ENCODE measurements at regions of chr11 and their contacts with region 1.

Region 1: DNA sequence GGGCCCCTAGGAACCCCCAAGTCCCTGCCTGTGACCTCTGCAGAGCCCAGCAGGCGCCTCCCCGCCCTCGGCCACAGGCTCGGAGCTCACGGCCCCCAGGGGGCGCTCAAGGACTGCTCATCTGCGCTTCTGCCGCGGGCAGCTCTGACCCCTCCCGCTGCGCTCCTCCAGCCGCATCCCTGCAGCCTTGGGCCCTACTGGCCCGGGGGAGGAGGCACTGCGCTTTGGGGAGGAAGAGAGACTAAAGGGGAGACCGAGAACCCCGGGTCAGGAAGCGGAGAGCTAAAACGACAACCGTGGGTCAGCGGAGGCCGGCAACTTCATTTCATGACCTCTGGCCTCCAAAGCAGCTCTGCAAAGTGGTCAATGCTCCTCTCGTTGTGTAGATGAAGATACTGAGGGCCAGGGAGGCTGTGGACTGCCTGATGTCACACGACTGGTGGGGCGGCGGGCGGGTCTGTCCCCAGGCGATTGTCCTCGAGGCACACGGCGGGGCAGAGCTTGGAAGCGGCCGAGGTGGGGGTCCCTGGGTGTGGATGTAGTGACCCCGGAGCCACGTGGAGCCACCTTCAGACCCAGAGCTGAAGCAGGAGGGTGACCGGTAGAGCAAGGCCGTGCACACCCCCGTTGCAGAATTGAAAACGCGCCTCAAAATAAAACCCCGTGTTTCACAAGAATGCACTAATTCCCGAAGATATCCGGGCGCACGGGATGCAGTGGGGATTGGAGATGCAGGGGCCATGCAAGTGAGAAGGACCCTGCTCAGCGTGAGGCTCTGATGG is 2.7 kb upstream of the KRTAP5-6 start:
- DNase-seq: peak; percentile 80 to 88
- ATAC-seq: peak; percentile 82 to 95
- H3K4me3 ChIP-seq: peak overlapping the region; percentile 62
- H3K27ac ChIP-seq: peak overlapping the region; percentile 87 to 92
- H3K4me1 ChIP-seq: no peaks in the 10 kb centered on the region
- CTCF ChIP-seq: peak; percentile 88
- EP300 ChIP-seq: no peak
- POLR2A ChIP-seq: no peak
- RAD21 ChIP-seq: peak; percentile 94 to 99

Region 2: DNA sequence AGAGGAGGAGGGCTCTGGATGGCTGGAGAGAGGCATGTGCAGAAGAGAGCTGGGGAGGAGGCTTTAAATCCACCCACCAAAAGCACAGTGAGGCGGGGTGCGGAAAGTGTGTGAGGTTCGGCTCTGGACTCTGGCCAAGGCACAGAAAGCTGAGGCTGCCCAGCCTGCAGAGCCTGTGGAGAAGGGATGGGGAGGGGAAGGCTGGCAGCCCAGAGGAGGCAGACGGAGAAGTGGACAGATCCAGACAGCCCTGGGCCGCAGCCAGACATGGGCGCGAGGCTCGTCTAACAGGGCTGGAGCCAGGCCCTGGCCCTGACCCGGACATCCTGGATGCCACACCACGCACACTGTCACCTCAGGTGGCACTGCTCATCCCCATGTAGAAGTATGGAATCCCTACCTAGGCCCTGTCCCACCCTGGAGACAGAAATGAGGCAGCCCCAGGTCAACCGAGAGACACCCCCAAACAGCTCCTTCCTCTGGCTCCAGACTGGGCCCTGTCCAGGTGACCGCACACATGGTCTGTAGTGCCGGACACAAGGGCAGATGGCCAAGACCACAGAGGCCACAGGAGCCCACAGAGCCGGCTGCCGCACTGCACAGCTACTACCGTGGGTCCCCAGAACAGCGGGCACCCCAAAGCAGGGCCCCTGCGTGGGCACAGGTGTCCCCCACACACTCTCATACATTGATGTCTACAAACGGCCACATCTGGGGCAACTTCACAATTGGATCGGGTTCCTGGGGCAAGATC is 191.1 kb before region 1 on chr11:
- CTCF ChIA-PET with region 1: no interaction called
- POLR2A ChIA-PET with region 1: no interaction called
- DNase-seq: no peak
- ATAC-seq: no peak
- H3K4me3 ChIP-seq: no peak overlapping the region
- H3K27ac ChIP-seq: no peak overlapping the region
- H3K4me1 ChIP-seq: no peaks in the 10 kb centered on the region
- CTCF ChIP-seq: no peak
- EP300 ChIP-seq: no peak
- POLR2A ChIP-seq: no peak
- RAD21 ChIP-seq: no peak

Region 3: GRCh38 chr11:1572197-1573076 is 121.8 kb before region 1 on chr11 and contains the start of gene DUSP8:
- CTCF ChIA-PET with region 1: no interaction called
- POLR2A ChIA-PET with region 1: no interaction called
- DNase-seq: peak; percentile 87 to 90
- ATAC-seq: peak; percentile 13 to 35
- H3K4me3 ChIP-seq: peak within 1 kb of the TSS; percentile 74
- H3K27ac ChIP-seq: peak within 1 kb of the TSS; percentile 89 to 95
- H3K4me1 ChIP-seq: peaks cover 37% of the 10 kb centered on the region
- CTCF ChIP-seq: no peak
- EP300 ChIP-seq: peak in 1 of 2 experiments; percentile 23; a peak in 1 of 5 replicates
- POLR2A ChIP-seq: no peak
- RAD21 ChIP-seq: no peak
- polyA plus RNA-seq, gene DUSP8: 2.6 and 3.6 TPM in 2 replicates

Region 4: GRCh38 chr11:1682225-1682905 is 11.9 kb before region 1 on chr11:
- CTCF ChIA-PET with region 1: interaction called, 103 read pairs
- POLR2A ChIA-PET with region 1: no interaction called
- DNase-seq: no peak
- ATAC-seq: no peak
- H3K4me3 ChIP-seq: no peak overlapping the region
- H3K27ac ChIP-seq: no peak overlapping the region
- H3K4me1 ChIP-seq: no peaks in the 10 kb centered on the region
- CTCF ChIP-seq: no peak
- EP300 ChIP-seq: no peak
- POLR2A ChIP-seq: no peak
- RAD21 ChIP-seq: no peak

Region 5: GRCh38 chr11:1749414-1750312 is 55.4 kb after region 1 on chr11:
- CTCF ChIA-PET with region 1: interaction called, 12 read pairs
- POLR2A ChIA-PET with region 1: interaction called, 5 read pairs
- DNase-seq: peak in 1 of 2 experiments; percentile 42
- ATAC-seq: peak; percentile 46 to 51
- H3K4me3 ChIP-seq: peak overlapping the region; percentile 34; the same call in 2 of the 3 replicates
- H3K27ac ChIP-seq: peak overlapping the region in 1 of 2 experiments; percentile 80; a peak in 3 of 6 replicates
- H3K4me1 ChIP-seq: peaks cover 24% of the 10 kb centered on the region; the same call in 2 of the 3 replicates
- CTCF ChIP-seq: no peak
- EP300 ChIP-seq: no peak
- POLR2A ChIP-seq: no peak
- RAD21 ChIP-seq: no peak

Region 6: GRCh38 chr11:1807264-1807995 is 113.2 kb after region 1 on chr11:
- CTCF ChIA-PET with region 1: interaction called, 71 read pairs
- POLR2A ChIA-PET with region 1: interaction called, 4 read pairs
- DNase-seq: peak; percentile 32 to 59
- ATAC-seq: peak; percentile 81 to 92; a peak in 5 of 6 replicates
- H3K4me3 ChIP-seq: no peak overlapping the region
- H3K27ac ChIP-seq: no peak overlapping the region
- H3K4me1 ChIP-seq: no peaks in the 10 kb centered on the region
- CTCF ChIP-seq: peak; percentile 14; the same call in 1 of the 3 replicates
- EP300 ChIP-seq: no peak
- POLR2A ChIP-seq: no peak
- RAD21 ChIP-seq: peak; percentile 25 to 44; a peak in 3 of 5 replicates

Region 7: DNA sequence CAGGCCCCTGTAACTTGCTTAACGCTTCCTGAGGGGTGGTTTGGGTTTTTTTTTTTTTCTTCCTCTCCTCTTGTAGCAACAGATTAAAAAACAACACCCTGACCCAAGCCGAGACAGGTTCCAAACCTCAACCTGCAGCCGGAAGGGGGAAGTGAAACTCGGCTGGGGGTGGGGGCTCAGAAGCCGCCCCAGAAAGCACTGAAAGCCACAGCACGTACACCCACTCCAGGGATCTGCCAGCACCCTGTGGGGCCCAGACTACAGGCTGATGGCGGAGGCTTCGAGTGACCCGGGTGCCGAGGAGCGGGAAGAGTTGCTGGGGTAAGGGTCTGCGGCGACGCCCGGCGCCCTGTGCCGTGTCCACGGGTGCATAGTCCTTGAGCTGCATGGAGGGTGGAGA is 158.6 kb after region 1 on chr11 and contains the start of gene LSP1:
- CTCF ChIA-PET with region 1: interaction called, 26 read pairs
- POLR2A ChIA-PET with region 1: no interaction called
- DNase-seq: no peak
- ATAC-seq: no peak
- H3K4me3 ChIP-seq: no peak within 1 kb of the TSS
- H3K27ac ChIP-seq: no peak within 1 kb of the TSS
- H3K4me1 ChIP-seq: no peaks in the 10 kb centered on the region
- CTCF ChIP-seq: no peak
- EP300 ChIP-seq: no peak
- POLR2A ChIP-seq: no peak
- RAD21 ChIP-seq: no peak
- polyA plus RNA-seq, gene LSP1: 0.42 and 0.67 TPM in 2 replicates

Region 8: GRCh38 chr11:1896923-1897322 is 202.7 kb after region 1 on chr11:
- CTCF ChIA-PET with region 1: interaction called, 16 read pairs
- POLR2A ChIA-PET with region 1: no interaction called
- DNase-seq: no peak
- ATAC-seq: no peak
- H3K4me3 ChIP-seq: no peak overlapping the region
- H3K27ac ChIP-seq: no peak overlapping the region
- H3K4me1 ChIP-seq: no peaks in the 10 kb centered on the region
- CTCF ChIP-seq: no peak
- EP300 ChIP-seq: no peak
- POLR2A ChIP-seq: no peak
- RAD21 ChIP-seq: no peak

Region 9: GRCh38 chr11:2002807-2003206 is 308.6 kb after region 1 on chr11:
- CTCF ChIA-PET with region 1: interaction called, 57 read pairs
- POLR2A ChIA-PET with region 1: no interaction called
- DNase-seq: no peak
- ATAC-seq: peak; percentile 49 to 72; a peak in 4 of 6 replicates
- H3K4me3 ChIP-seq: no peak overlapping the region
- H3K27ac ChIP-seq: no peak overlapping the region
- H3K4me1 ChIP-seq: no peaks in the 10 kb centered on the region
- CTCF ChIP-seq: no peak
- EP300 ChIP-seq: no peak
- POLR2A ChIP-seq: no peak
- RAD21 ChIP-seq: no peak

Measured in A549 (cell line).